CD8-positive, alpha-beta T cell (primary cell): ENCODE measurements at regions of chr12 and their contacts with region 1.

Region 1: GRCh38 chr12:64696080-64696741 is 63.0 kb downstream of the GNS start:
- DNase-seq: peak in 1 of 9 experiments; percentile 55
- ATAC-seq: no peak
- H3K4me3 ChIP-seq: no peak overlapping the region
- H3K4me3 Mint-ChIP-seq: peak overlapping the region; percentile 56
- H3K27ac ChIP-seq: peak overlapping the region in 1 of 2 experiments; percentile 36
- H3K27ac Mint-ChIP-seq: peak overlapping the region; percentile 91
- H3K4me1 ChIP-seq: peaks cover 79% of the 10 kb centered on the region
- H3K4me1 Mint-ChIP-seq: peaks cover 82% of the 10 kb centered on the region
- H3K27me3 ChIP-seq: no peaks in the 10 kb centered on the region
- H3K27me3 Mint-ChIP-seq: no peaks in the 10 kb centered on the region
- CTCF ChIP-seq: no peak

Region 2: DNA sequence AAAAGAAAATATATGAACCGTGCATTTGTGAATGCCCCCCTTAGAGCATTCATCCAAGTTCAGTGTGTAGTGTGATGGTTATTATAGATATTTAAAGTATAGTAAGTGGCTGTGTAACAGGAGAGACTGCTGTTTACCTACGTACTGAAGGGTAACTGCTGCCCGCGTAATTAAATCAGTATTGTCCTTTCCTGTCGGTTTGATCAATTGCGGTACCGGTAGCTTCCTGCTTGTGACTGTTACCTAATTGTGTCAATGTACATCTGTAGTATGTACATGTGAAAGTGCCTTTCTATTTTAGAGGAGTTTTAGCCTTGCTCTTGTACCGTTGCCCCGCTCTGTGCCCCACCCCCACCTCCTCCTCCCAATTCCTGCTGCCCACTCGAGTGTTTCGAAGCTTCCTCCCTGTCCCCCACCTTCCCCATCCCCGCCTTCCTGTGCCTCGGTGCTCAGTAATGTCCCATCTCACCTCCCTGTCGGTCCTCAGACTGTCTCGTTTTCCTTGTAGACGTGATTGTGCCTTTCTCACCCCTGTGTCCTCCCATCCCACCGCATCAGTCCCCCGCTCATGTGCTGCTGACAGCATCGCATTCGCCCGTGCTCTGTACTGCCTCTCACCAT is 549.1 kb before region 1 on chr12:
- CTCF ChIA-PET with region 1: no interaction called
- POLR2A ChIA-PET with region 1: no interaction called
- intact Hi-C with region 1: no loop called
- DNase-seq: no peak
- ATAC-seq: no peak
- H3K4me3 ChIP-seq: no peak overlapping the region
- H3K4me3 Mint-ChIP-seq: peak overlapping the region; percentile 64
- H3K27ac ChIP-seq: no peak overlapping the region
- H3K27ac Mint-ChIP-seq: no peak overlapping the region
- H3K4me1 ChIP-seq: no peaks in the 10 kb centered on the region
- H3K4me1 Mint-ChIP-seq: peaks cover 5% of the 10 kb centered on the region
- H3K27me3 ChIP-seq: no peaks in the 10 kb centered on the region
- H3K27me3 Mint-ChIP-seq: no peaks in the 10 kb centered on the region
- CTCF ChIP-seq: no peak

Region 3: DNA sequence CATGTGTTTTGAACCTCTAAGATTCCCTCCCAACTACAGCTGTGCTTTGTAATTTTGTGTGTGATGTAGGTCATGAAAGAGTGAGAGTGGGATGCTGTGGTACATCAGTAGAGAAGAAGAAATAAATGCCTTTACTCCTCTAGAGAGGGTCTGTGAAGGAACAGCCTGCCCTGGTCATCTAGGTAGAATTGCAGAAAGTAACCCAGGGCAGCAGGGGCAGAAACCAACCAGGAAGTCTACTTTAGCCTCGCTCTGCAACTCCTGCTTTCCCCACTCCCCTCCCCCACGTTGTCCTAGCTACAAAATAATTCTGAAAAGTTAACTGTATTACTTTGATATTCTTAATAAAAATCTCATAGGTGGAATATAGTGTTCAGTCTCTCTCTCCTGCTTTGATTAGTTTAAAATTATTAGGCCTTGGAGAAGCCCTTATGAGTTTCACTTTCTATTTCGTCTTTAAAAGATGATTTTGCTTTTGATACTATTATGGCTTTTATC is 236.8 kb before region 1 on chr12:
- CTCF ChIA-PET with region 1: interaction called, 4 read pairs
- POLR2A ChIA-PET with region 1: no interaction called
- intact Hi-C with region 1: loop called (anchors 5 to 10 kb)
- DNase-seq: peak in 3 of 9 experiments; percentile 26 to 61 (median 39)
- ATAC-seq: peak; percentile 35
- H3K4me3 ChIP-seq: peak overlapping the region; percentile 41 to 59
- H3K4me3 Mint-ChIP-seq: peak overlapping the region; percentile 83
- H3K27ac ChIP-seq: peak overlapping the region; percentile 62 to 78
- H3K27ac Mint-ChIP-seq: peak overlapping the region; percentile 93
- H3K4me1 ChIP-seq: peaks cover 19% of the 10 kb centered on the region
- H3K4me1 Mint-ChIP-seq: peaks cover 35% of the 10 kb centered on the region
- H3K27me3 ChIP-seq: no peaks in the 10 kb centered on the region
- H3K27me3 Mint-ChIP-seq: no peaks in the 10 kb centered on the region
- CTCF ChIP-seq: no peak

Region 4: GRCh38 chr12:64551698-64552097 is 144.5 kb before region 1 on chr12:
- CTCF ChIA-PET with region 1: interaction called, 317 read pairs
- POLR2A ChIA-PET with region 1: interaction called, 12 read pairs
- intact Hi-C with region 1: loop called (anchors 1 kb)
- DNase-seq: no peak
- ATAC-seq: no peak
- H3K4me3 ChIP-seq: no peak overlapping the region
- H3K4me3 Mint-ChIP-seq: no peak overlapping the region
- H3K27ac ChIP-seq: no peak overlapping the region
- H3K27ac Mint-ChIP-seq: no peak overlapping the region
- H3K4me1 ChIP-seq: no peaks in the 10 kb centered on the region
- H3K4me1 Mint-ChIP-seq: peaks cover 8% of the 10 kb centered on the region
- H3K27me3 ChIP-seq: no peaks in the 10 kb centered on the region
- H3K27me3 Mint-ChIP-seq: no peaks in the 10 kb centered on the region
- CTCF ChIP-seq: no peak

Region 5: DNA sequence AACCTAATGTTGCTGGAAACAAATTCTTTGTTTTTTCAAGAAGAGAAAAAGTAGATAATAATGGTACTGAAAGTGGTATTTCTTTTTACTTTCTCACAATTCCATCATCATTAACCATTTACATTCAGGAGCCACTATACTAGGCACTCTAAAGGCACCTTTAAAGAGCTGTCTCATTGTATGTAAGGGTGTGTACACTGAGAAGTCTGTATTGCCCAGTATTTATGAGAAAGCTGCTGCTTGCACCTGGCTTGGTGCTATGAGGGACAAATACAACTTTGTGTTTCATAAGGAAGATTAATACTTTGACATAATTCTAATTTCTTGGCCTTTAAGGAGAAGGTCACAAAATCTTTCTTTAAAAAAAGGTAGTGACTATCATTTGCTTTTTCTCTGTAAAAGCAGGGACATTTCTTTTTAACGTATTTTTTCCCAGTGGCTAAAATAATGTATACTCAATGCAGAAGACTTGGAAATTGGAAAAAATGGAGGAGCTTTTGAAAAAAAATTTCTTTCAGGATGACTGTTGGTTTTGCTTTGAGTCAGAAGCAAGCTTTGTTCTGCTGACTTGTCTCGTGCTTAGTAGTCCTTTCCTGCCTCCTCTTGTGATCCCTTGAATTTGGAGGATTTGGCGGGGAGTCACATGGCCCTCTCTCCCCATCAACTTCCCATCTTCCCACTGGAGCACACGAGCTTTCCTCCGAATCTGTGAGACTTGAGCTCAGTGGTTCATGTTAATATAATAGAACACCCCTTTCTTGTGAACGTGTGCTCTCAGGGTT is 35.8 kb before region 1 on chr12:
- CTCF ChIA-PET with region 1: interaction called, 5 read pairs
- POLR2A ChIA-PET with region 1: no interaction called
- intact Hi-C with region 1: loop called (anchors 5 kb)
- DNase-seq: no peak
- ATAC-seq: no peak
- H3K4me3 ChIP-seq: no peak overlapping the region
- H3K4me3 Mint-ChIP-seq: no peak overlapping the region
- H3K27ac ChIP-seq: peak overlapping the region in 1 of 2 experiments; percentile 21
- H3K27ac Mint-ChIP-seq: peak overlapping the region; percentile 83
- H3K4me1 ChIP-seq: peaks cover 79% of the 10 kb centered on the region
- H3K4me1 Mint-ChIP-seq: peaks cover 86% of the 10 kb centered on the region
- H3K27me3 ChIP-seq: no peaks in the 10 kb centered on the region
- H3K27me3 Mint-ChIP-seq: no peaks in the 10 kb centered on the region
- CTCF ChIP-seq: no peak

Region 6: GRCh38 chr12:64679487-64679983 is 16.7 kb before region 1 on chr12:
- CTCF ChIA-PET with region 1: interaction called, 12 read pairs
- POLR2A ChIA-PET with region 1: interaction called, 13 read pairs
- intact Hi-C with region 1: loop called in 1 of 2 experiments (anchors 2 kb)
- DNase-seq: peak; percentile 54 to 91 (median 76)
- ATAC-seq: peak; percentile 68
- H3K4me3 ChIP-seq: peak overlapping the region; percentile 22 to 33
- H3K4me3 Mint-ChIP-seq: peak overlapping the region; percentile 67
- H3K27ac ChIP-seq: peak overlapping the region; percentile 71 to 94
- H3K27ac Mint-ChIP-seq: peak overlapping the region; percentile 98
- H3K4me1 ChIP-seq: peaks cover 97% of the 10 kb centered on the region
- H3K4me1 Mint-ChIP-seq: peaks cover 92% of the 10 kb centered on the region
- H3K27me3 ChIP-seq: no peaks in the 10 kb centered on the region
- H3K27me3 Mint-ChIP-seq: no peaks in the 10 kb centered on the region
- CTCF ChIP-seq: no peak

Region 7: GRCh38 chr12:64714551-64714968 is 18.3 kb after region 1 on chr12:
- CTCF ChIA-PET with region 1: interaction called, 14 read pairs
- POLR2A ChIA-PET with region 1: interaction called, 3 read pairs
- intact Hi-C with region 1: loop called in 1 of 2 experiments (anchors 2 kb)
- DNase-seq: peak in 5 of 9 experiments; percentile 20 to 79 (median 57)
- ATAC-seq: peak; percentile 94
- H3K4me3 ChIP-seq: no peak overlapping the region
- H3K4me3 Mint-ChIP-seq: no peak overlapping the region
- H3K27ac ChIP-seq: peak overlapping the region in 1 of 2 experiments; percentile 49
- H3K27ac Mint-ChIP-seq: peak overlapping the region; percentile 73
- H3K4me1 ChIP-seq: peaks cover 10% of the 10 kb centered on the region
- H3K4me1 Mint-ChIP-seq: peaks cover 31% of the 10 kb centered on the region
- H3K27me3 ChIP-seq: no peaks in the 10 kb centered on the region
- H3K27me3 Mint-ChIP-seq: no peaks in the 10 kb centered on the region
- CTCF ChIP-seq: no peak

Region 8: GRCh38 chr12:66247741-66248140 is 1551.5 kb after region 1 on chr12:
- CTCF ChIA-PET with region 1: no interaction called
- POLR2A ChIA-PET with region 1: no interaction called
- intact Hi-C with region 1: no loop called
- DNase-seq: no peak
- ATAC-seq: no peak
- H3K4me3 ChIP-seq: no peak overlapping the region
- H3K4me3 Mint-ChIP-seq: no peak overlapping the region
- H3K27ac ChIP-seq: no peak overlapping the region
- H3K27ac Mint-ChIP-seq: no peak overlapping the region
- H3K4me1 ChIP-seq: no peaks in the 10 kb centered on the region
- H3K4me1 Mint-ChIP-seq: no peaks in the 10 kb centered on the region
- H3K27me3 ChIP-seq: no peaks in the 10 kb centered on the region
- H3K27me3 Mint-ChIP-seq: peaks cover 8% of the 10 kb centered on the region
- CTCF ChIP-seq: no peak